Activated CD4-positive, alpha-beta memory T cell treated with anti-CD3 and anti-CD28 coated beads for 36 hours (primary cell): ENCODE measurements at regions of chr2 and their contacts with region 1.

Region 1: DNA sequence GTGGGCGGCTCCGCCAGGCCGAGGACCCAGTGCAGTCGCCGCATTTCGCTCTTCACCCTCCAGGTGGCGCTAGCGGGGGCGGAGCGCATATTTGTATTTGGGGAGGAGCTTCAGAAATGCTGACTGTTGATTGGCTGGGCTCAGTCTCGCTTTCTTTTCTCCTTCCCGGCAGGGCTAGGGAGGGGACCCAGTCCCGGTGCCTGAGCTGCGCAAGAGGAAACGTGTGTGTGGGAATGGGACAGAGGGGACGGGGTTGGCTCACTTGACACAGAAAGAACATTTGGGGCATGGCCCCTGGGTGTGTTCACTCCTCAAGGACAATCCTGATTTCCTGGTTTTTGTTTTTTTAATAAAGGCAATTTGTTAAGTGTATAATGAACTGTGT is 20.3 kb upstream of the DNMT3A start:
- DNase-seq: peak; percentile 97
- H3K4me3 Mint-ChIP-seq: peak overlapping the region; percentile 77
- H3K27ac Mint-ChIP-seq: peak overlapping the region; percentile 93
- H3K4me1 Mint-ChIP-seq: peaks cover 15% of the 10 kb centered on the region
- H3K27me3 Mint-ChIP-seq: no peaks in the 10 kb centered on the region

Region 2: GRCh38 chr2:25112113-25112512 is 249.9 kb before region 1 on chr2:
- CTCF ChIA-PET with region 1: no interaction called
- POLR2A ChIA-PET with region 1: no interaction called
- intact Hi-C with region 1: no loop called
- DNase-seq: no peak
- H3K4me3 Mint-ChIP-seq: no peak overlapping the region
- H3K27ac Mint-ChIP-seq: no peak overlapping the region
- H3K4me1 Mint-ChIP-seq: no peaks in the 10 kb centered on the region
- H3K27me3 Mint-ChIP-seq: peaks cover 3% of the 10 kb centered on the region

Region 3: GRCh38 chr2:25301453-25302352 is 60.3 kb before region 1 on chr2:
- CTCF ChIA-PET with region 1: interaction called, 11 read pairs
- POLR2A ChIA-PET with region 1: interaction called, 3 read pairs
- intact Hi-C with region 1: loop called (anchors 1 kb)
- DNase-seq: peak; percentile 94
- H3K4me3 Mint-ChIP-seq: no peak overlapping the region
- H3K27ac Mint-ChIP-seq: peak overlapping the region; percentile 47
- H3K4me1 Mint-ChIP-seq: peaks cover 58% of the 10 kb centered on the region
- H3K27me3 Mint-ChIP-seq: no peaks in the 10 kb centered on the region

Region 4: GRCh38 chr2:25323042-25323514 is 39.0 kb before region 1 on chr2:
- CTCF ChIA-PET with region 1: interaction called, 17 read pairs
- POLR2A ChIA-PET with region 1: no interaction called
- intact Hi-C with region 1: loop called (anchors 1 kb)
- DNase-seq: peak; percentile 89
- H3K4me3 Mint-ChIP-seq: peak overlapping the region; percentile 68
- H3K27ac Mint-ChIP-seq: peak overlapping the region; percentile 92
- H3K4me1 Mint-ChIP-seq: peaks cover 54% of the 10 kb centered on the region
- H3K27me3 Mint-ChIP-seq: no peaks in the 10 kb centered on the region

Region 5: DNA sequence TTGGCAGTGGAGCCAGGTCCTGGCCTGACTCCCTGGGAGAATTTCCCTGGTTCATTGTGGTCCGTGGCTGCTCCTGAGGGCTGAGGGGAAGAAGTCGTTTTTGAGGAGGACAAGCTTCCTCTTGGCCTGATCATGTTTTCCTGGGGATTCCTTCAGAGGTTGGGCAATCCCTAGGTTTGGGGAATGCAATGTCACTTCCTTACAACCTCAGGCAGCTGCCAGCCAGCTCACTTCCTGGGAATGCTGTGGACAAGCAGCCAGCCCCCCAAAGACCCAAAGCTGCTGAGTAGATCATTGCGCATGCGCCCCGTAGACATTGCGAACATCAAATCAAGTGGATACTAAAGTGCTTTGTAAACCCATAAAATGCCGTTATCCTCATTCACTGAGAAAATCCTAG is 12.6 kb before region 1 on chr2:
- CTCF ChIA-PET with region 1: interaction called, 25 read pairs
- POLR2A ChIA-PET with region 1: interaction called, 7 read pairs
- intact Hi-C with region 1: loop called (anchors 1 kb)
- DNase-seq: no peak
- H3K4me3 Mint-ChIP-seq: no peak overlapping the region
- H3K27ac Mint-ChIP-seq: no peak overlapping the region
- H3K4me1 Mint-ChIP-seq: peaks cover 38% of the 10 kb centered on the region
- H3K27me3 Mint-ChIP-seq: peaks cover 3% of the 10 kb centered on the region

Region 6: GRCh38 chr2:25521665-25522387 is 159.8 kb after region 1 on chr2:
- CTCF ChIA-PET with region 1: interaction called, 3 read pairs
- POLR2A ChIA-PET with region 1: interaction called, 3 read pairs
- intact Hi-C with region 1: loop called (anchors 1 kb)
- DNase-seq: peak; percentile 12
- H3K4me3 Mint-ChIP-seq: no peak overlapping the region
- H3K27ac Mint-ChIP-seq: peak overlapping the region; percentile 26
- H3K4me1 Mint-ChIP-seq: peaks cover 9% of the 10 kb centered on the region
- H3K27me3 Mint-ChIP-seq: no peaks in the 10 kb centered on the region

Region 7: GRCh38 chr2:25878361-25879132 is 516.5 kb after region 1 on chr2 and contains the start of gene ASXL2:
- CTCF ChIA-PET with region 1: no interaction called
- POLR2A ChIA-PET with region 1: interaction called, 3 read pairs
- intact Hi-C with region 1: loop called (anchors 10 kb)
- DNase-seq: peak; percentile 99
- H3K4me3 Mint-ChIP-seq: peak within 1 kb of the TSS; percentile 93
- H3K27ac Mint-ChIP-seq: peak within 1 kb of the TSS; percentile 94
- H3K4me1 Mint-ChIP-seq: peaks cover 39% of the 10 kb centered on the region
- H3K27me3 Mint-ChIP-seq: no peaks in the 10 kb centered on the region
- total RNA-seq, gene ASXL2: 37.8 to 38.7 TPM